Esophagus muscularis mucosa (tissue), 4 donors: ENCODE measurements at regions of chr1 and their contacts with region 1.

Region 1: DNA sequence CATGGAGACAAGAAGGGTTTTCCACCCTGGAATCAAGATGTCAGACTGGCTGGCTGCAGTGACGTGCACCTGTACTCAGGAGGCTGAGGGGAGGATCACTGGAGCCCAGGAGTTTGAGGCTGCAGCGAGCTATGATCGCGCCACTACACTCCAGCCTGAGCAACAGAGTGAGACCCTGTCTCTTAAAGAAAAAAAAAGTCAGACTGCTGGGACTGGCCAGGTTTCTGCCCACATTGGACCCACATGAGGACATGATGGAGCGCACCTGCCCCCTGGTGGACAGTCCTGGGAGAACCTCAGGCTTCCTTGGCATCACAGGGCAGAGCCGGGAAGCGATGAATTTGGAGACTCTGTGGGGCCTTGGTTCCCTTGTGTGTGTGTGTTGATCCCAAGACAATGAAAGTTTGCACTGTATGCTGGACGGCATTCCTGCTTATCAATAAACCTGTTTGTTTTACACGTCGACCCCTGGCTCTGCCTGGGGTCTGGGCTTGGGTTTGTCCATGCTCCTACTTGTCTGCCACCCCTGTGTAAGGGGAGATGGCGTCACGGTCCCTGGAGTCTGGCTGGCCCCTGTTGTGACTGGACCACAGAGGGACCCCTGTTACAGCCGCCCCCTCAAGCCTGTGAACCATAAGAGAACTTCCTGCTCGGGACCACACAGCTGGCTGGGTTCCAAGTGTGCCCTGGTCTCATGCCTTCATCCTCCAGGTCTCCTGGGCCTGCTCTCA is 20.9 kb upstream of the VPS13D start:
- DNase-seq: peak; percentile 97
- H3K4me3 ChIP-seq: no peak overlapping the region
- H3K27ac ChIP-seq: no peak overlapping the region
- H3K4me1 ChIP-seq: peaks cover 8 to 16% (median 12%) of the 10 kb centered on the region in 4 donors
- H3K27me3 ChIP-seq: no peaks in the 10 kb centered on the region
- CTCF ChIP-seq: peak; percentile 91 to 96 (median 94)
- EP300 ChIP-seq: no peak
- POLR2A ChIP-seq: no peak

Region 2: GRCh38 chr1:12095452-12096263 is 113.3 kb before region 1 on chr1:
- intact Hi-C with region 1: no loop called
- DNase-seq: no peak
- H3K4me3 ChIP-seq: no peak overlapping the region
- H3K27ac ChIP-seq: no peak overlapping the region
- H3K4me1 ChIP-seq: no peaks in the 10 kb centered on the region
- H3K27me3 ChIP-seq: no peaks in the 10 kb centered on the region
- CTCF ChIP-seq: no peak
- EP300 ChIP-seq: no peak
- POLR2A ChIP-seq: no peak

Region 3: DNA sequence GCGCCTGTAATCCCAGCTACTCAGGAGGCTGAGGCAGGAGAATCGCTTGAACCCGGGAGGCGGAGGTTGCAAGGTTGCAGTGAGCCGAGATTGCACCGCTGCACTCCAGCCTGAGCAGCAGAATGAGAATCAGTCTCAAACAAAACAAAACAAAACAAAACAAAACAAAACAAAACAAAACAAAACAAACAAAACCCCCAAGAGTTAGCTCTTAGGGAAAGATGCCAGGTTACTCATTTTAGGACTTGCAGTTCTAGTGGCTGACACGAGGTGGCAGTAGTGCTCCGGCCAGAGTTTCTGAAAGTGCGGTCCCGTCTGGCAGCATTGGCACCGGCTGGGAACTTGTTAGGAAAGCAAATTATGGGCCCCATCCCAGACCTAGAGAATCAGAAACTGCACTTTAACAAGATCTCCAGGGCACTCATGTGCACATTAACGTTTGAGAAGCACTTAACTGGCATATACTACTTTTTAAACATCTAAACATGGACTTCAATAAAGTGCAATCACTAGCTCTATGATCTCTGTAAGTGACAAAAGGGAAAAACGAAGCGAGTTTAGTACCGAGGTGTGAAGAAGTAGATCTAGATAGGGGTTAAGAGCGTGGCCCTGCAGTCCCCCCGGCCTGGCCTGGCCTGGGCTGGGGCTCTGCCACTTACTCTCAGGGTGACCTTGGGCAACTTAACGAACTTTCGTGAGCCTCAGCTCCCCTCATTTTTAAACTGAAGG is 84.1 kb before region 1 on chr1:
- intact Hi-C with region 1: loop called (anchors 1 kb)
- DNase-seq: peak; percentile 95
- H3K4me3 ChIP-seq: no peak overlapping the region
- H3K27ac ChIP-seq: peak overlapping the region in 2 of 4 donors; percentile 15 to 43
- H3K4me1 ChIP-seq: peaks cover 16 to 30% (median 24%) of the 10 kb centered on the region in 4 donors
- H3K27me3 ChIP-seq: peaks cover 0 to 11% (median 0%) of the 10 kb centered on the region in 4 donors
- CTCF ChIP-seq: peak; percentile 96 to 98 (median 97)
- EP300 ChIP-seq: no peak
- POLR2A ChIP-seq: no peak

Region 4: DNA sequence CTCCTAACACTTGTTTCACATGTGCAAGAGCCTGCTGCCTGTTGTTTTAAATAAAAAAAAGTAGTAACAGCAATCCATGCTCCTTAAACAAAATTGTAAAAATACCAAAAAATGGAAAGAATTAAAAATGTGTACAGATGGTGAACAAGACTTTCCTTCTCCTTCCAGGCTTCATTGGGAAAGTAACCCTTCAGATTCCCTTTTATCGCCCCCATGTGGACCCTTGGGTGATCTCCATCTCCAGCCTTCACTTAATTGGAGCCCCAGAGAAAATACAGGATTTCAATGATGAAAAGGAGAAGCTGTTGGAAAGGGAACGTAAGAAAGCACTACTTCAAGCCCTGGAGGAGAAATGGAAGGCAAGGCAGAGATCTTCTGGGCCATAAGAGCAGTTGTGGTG is 35.1 kb after region 1 on chr1:
- intact Hi-C with region 1: no loop called
- DNase-seq: no peak
- H3K4me3 ChIP-seq: no peak overlapping the region
- H3K27ac ChIP-seq: no peak overlapping the region
- H3K4me1 ChIP-seq: no peaks in the 10 kb centered on the region
- H3K27me3 ChIP-seq: no peaks in the 10 kb centered on the region
- CTCF ChIP-seq: peak in 1 of 3 experiments; percentile 30
- EP300 ChIP-seq: no peak
- POLR2A ChIP-seq: no peak

Region 5: DNA sequence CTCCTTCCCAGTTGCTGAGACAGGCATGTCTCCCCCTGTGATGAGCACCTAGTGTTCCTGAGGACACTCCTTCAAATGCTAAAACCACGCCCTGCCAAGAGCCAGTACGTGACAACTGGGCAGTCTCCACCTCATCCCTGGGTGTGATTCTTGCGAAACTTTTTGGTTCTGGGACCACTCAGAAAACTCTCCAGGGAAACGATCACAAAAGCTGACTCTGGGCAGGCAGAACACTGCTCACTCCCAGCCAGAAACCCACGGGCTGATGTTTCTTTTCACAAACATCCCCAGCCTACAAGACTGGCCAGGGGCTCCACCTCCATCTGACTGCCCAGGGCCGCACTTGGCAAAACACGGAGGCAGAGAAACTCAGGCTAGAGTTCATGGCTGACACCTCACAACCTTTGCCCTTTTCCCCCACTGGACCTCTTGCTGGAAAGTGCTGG is 384.7 kb after region 1 on chr1:
- intact Hi-C with region 1: no loop called
- DNase-seq: peak; percentile 93
- H3K4me3 ChIP-seq: peak overlapping the region in 1 of 4 donors; percentile 0
- H3K27ac ChIP-seq: peak overlapping the region; percentile 92 to 95 (median 94)
- H3K4me1 ChIP-seq: peaks cover 91 to 100% (median 97%) of the 10 kb centered on the region in 4 donors
- H3K27me3 ChIP-seq: no peaks in the 10 kb centered on the region
- CTCF ChIP-seq: no peak
- EP300 ChIP-seq: peak; percentile 68
- POLR2A ChIP-seq: no peak